ENCODE measurements at regions of chr22 and their contacts with region 1.

Region 1: GRCh38 chr22:46035742-46036557 is 59.0 kb upstream of the WNT7B start:
- DNase-seq: peak; percentile 99
- H3K4me3 Mint-ChIP-seq: peak overlapping the region; percentile 84
- H3K27ac Mint-ChIP-seq: peak overlapping the region; percentile 76
- H3K4me1 Mint-ChIP-seq: peaks cover 19% of the 10 kb centered on the region
- H3K27me3 Mint-ChIP-seq: no peaks in the 10 kb centered on the region

Region 2: GRCh38 chr22:46013460-46014416 is 22.2 kb before region 1 on chr22:
- intact Hi-C with region 1: loop called (anchors 1 kb)
- DNase-seq: peak; percentile 66
- H3K4me3 Mint-ChIP-seq: peak overlapping the region; percentile 87
- H3K27ac Mint-ChIP-seq: peak overlapping the region; percentile 82
- H3K4me1 Mint-ChIP-seq: peaks cover 6% of the 10 kb centered on the region
- H3K27me3 Mint-ChIP-seq: peaks cover 12% of the 10 kb centered on the region

Region 3: GRCh38 chr22:46071451-46072109 is 35.6 kb after region 1 on chr22:
- intact Hi-C with region 1: loop called (anchors 1 kb)
- DNase-seq: peak; percentile 22
- H3K4me3 Mint-ChIP-seq: peak overlapping the region; percentile 85
- H3K27ac Mint-ChIP-seq: peak overlapping the region; percentile 92
- H3K4me1 Mint-ChIP-seq: peaks cover 30% of the 10 kb centered on the region
- H3K27me3 Mint-ChIP-seq: peaks cover 5% of the 10 kb centered on the region

Region 4: GRCh38 chr22:46296257-46297150 is 260.6 kb after region 1 on chr22 and contains the start of gene GTSE1:
- intact Hi-C with region 1: loop called (anchors 1 kb)
- DNase-seq: peak; percentile 97
- H3K4me3 Mint-ChIP-seq: peak within 1 kb of the TSS; percentile 91
- H3K27ac Mint-ChIP-seq: peak within 1 kb of the TSS; percentile 94
- H3K4me1 Mint-ChIP-seq: peaks cover 52% of the 10 kb centered on the region
- H3K27me3 Mint-ChIP-seq: no peaks in the 10 kb centered on the region
- total RNA-seq, gene GTSE1: 39.0 and 39.9 TPM in 2 replicates

Region 5: GRCh38 chr22:46308283-46308988 is 272.5 kb after region 1 on chr22:
- intact Hi-C with region 1: no loop called
- DNase-seq: no peak
- H3K4me3 Mint-ChIP-seq: no peak overlapping the region
- H3K27ac Mint-ChIP-seq: no peak overlapping the region
- H3K4me1 Mint-ChIP-seq: peaks cover 8% of the 10 kb centered on the region
- H3K27me3 Mint-ChIP-seq: no peaks in the 10 kb centered on the region

Region 6: GRCh38 chr22:46576556-46577367 is 540.8 kb after region 1 on chr22:
- intact Hi-C with region 1: loop called (anchors 5 kb)
- DNase-seq: peak; percentile 58
- H3K4me3 Mint-ChIP-seq: peak overlapping the region; percentile 77
- H3K27ac Mint-ChIP-seq: no peak overlapping the region
- H3K4me1 Mint-ChIP-seq: peaks cover 38% of the 10 kb centered on the region
- H3K27me3 Mint-ChIP-seq: no peaks in the 10 kb centered on the region

Measured in activated T-helper 1 cell treated with anti-CD3 and anti-CD28 coated beads, Interleukin-12 subunit alpha, Interleukin-12 subunit beta, Interleukin-2, Interleukin-4 antibody, amounts not matched to agents 30 ng/mL and 10 ng/mL and 1 ng/mL, durations not matched to agents 14 hours and 24 hours and 36 hours (primary cell).